ENCODE measurements at regions of chr1 and their contacts with region 1.

Region 1: DNA sequence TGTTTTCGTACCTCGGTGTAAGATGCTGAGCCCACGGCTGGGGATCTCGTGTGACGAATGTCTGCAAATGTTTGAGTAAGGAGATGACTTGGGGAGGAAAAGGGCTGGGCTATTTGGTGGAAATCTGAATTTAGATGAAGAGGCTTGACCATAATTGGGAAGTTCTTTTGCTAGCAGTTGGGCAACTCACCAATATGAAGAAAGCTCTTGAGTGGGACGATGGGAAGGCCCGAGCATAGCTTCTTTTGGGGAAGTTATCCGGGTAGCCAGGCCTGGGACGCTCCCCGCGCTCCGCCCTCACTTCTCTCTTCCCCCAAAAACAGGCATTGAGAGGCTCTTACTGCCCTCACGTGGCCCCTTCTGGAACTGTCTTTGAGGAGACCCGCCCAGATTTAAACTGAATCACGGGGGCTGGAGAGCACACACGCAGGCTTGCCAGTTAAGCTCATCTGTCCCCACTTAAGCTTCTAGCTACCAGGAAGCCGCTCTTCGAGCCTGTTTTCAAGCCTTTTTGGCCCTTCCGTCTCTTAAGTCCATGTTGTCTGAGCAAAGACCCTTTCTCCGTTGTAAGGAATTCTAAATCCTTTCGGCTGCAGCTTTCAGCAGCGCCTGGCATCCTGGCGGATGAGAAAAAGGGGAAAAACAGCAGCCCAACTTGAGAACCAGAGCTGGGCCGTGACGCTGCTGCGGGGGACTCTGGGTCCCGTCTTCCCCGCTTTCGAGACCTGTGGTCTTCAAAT is 93.1 kb downstream of the NID1 start:
- DNase-seq: peak; percentile 88
- ATAC-seq: peak; percentile 97 to 99
- H3K4me3 ChIP-seq: peak overlapping the region; percentile 25; the same call in 2 of the 3 replicates
- H3K27ac ChIP-seq: peak overlapping the region; percentile 69 to 82
- H3K4me1 ChIP-seq: peaks cover 13% of the 10 kb centered on the region
- CTCF ChIP-seq: peak; percentile 91
- EP300 ChIP-seq: no peak
- POLR2A ChIP-seq: no peak
- RAD21 ChIP-seq: peak; percentile 96 to 98

Region 2: GRCh38 chr1:235597867-235598553 is 373.7 kb before region 1 on chr1:
- CTCF ChIA-PET with region 1: interaction called, 10 read pairs
- POLR2A ChIA-PET with region 1: no interaction called
- DNase-seq: peak; percentile 58 to 71
- ATAC-seq: peak; percentile 92 to 93
- H3K4me3 ChIP-seq: no peak overlapping the region
- H3K27ac ChIP-seq: no peak overlapping the region
- H3K4me1 ChIP-seq: no peaks in the 10 kb centered on the region
- CTCF ChIP-seq: peak; percentile 46
- EP300 ChIP-seq: no peak
- POLR2A ChIP-seq: no peak
- RAD21 ChIP-seq: peak; percentile 30 to 42; a peak in 3 of 5 replicates

Region 3: DNA sequence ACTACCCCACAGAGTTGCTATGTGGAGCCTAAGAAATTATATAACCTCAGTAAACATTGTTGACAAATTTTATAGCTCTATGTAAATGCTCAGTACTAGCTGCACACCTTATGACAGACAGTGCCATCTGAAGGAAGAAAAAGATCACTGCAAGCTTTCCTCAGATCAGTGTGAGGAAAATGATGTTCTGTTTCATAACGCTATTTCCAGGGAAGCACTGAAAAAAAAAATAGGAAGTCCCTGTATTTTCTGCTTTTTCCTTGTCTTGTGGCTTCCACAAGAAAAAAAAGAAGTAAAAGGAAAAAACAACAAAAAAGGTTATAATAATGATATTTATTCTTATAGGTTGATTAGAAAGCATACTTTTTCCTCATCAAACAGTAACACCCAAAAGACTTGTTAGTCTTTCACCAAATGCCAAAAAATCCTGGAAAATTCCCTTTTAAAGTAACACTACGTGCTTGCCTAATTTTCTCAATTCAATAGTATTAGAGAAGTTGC is 128.2 kb before region 1 on chr1:
- CTCF ChIA-PET with region 1: interaction called, 27 read pairs
- POLR2A ChIA-PET with region 1: no interaction called
- DNase-seq: peak; percentile 25 to 45
- ATAC-seq: peak; percentile 85 to 94; a peak in 5 of 6 replicates
- H3K4me3 ChIP-seq: no peak overlapping the region
- H3K27ac ChIP-seq: no peak overlapping the region
- H3K4me1 ChIP-seq: peaks cover 7% of the 10 kb centered on the region; the same call in 2 of the 3 replicates
- CTCF ChIP-seq: peak; percentile 60
- EP300 ChIP-seq: no peak
- POLR2A ChIP-seq: no peak
- RAD21 ChIP-seq: peak; percentile 58

Region 4: DNA sequence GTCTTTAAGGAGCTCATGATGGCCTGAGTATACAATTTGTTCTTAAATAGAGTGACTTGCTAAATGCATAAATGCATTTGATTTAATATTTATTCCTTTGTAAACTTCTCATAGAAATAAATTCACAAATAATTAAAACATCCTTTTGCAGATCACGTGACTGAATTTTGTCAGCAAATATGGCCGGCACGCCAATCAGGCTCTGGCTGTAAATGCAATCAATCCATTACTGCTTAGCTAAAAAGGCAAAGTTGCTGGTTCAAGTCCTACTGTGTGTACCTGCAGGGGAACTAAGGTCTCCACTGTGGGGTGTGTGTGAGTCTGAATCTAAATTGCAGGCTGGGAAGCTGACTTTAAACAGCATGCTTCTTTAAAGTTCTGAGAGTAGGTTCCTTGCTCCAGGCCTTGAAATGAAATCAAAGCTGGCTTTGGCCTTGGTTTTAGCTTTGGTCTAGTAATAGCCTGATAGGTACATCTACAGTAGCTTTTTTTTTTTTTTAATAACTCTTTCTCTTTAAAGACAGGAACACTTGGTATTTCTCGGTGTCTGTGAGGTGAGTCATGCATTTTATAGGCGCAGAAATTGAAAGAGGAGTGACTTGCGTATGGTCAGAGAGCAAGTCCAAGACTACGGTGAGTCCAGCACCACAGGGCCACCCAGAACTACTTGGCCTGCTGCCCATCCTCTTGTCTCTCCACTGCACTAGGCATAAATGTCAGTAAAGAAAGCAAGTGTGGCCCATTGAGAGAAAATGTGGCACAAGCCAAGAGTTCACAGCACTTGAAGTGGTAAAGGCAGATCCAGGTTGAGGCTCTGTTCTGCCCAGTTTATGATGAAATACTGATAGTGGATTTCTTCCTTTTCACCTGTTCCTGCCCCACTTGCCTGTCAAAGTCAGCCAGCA is 68.9 kb before region 1 on chr1:
- CTCF ChIA-PET with region 1: interaction called, 33 read pairs
- POLR2A ChIA-PET with region 1: no interaction called
- DNase-seq: peak; percentile 55 to 89
- ATAC-seq: peak; percentile 90 to 93
- H3K4me3 ChIP-seq: no peak overlapping the region
- H3K27ac ChIP-seq: peak overlapping the region; percentile 70 to 84
- H3K4me1 ChIP-seq: peaks cover 34% of the 10 kb centered on the region
- CTCF ChIP-seq: no peak
- EP300 ChIP-seq: peak; percentile 41 to 48; a peak in 2 of 5 replicates
- POLR2A ChIP-seq: no peak
- RAD21 ChIP-seq: no peak; a peak in 1 of 5 replicates

Region 5: DNA sequence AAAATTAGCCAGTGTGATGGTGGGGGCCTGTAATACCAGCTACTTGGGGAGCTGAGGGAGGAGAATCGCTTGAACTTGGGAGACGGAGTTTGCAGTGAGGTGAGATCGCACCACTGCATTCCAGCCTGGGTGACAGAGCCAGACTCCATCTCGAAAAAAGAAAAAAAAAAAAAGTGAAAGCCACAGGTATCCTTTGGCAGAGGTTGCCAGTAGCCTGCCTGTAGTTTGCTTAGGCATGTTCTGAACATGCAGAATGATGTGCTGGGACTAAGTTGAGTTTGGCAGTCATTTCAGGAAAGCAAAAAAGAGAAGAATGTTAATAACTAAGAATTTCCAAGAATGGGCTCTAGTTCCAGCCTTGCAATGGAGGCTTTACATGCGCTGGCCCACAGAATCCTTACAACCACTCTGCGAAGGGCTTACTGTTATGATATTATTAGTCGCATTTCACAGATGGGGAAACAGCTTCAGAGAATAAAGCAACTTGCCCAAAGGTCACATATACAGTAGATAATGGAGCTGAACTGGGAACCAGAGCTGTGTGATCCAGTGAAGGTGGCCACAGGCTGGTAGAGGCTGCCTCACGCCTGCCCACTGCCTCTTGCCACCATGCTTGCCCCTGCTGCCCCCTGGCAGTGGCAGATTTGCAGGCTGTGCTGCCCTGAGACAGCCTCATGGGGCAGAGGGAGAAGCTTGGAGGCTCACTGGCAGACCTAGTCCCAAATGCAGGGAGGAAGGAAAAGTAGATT is 38.5 kb before region 1 on chr1:
- CTCF ChIA-PET with region 1: interaction called, 22 read pairs
- POLR2A ChIA-PET with region 1: no interaction called
- DNase-seq: peak; percentile 27 to 31
- ATAC-seq: peak; percentile 83 to 84; a peak in 5 of 6 replicates
- H3K4me3 ChIP-seq: no peak overlapping the region
- H3K27ac ChIP-seq: peak overlapping the region in 1 of 2 experiments; percentile 56; a peak in 2 of 6 replicates
- H3K4me1 ChIP-seq: no peaks in the 10 kb centered on the region
- CTCF ChIP-seq: no peak
- EP300 ChIP-seq: no peak
- POLR2A ChIP-seq: no peak
- RAD21 ChIP-seq: peak; percentile 22 to 28; a peak in 1 of 5 replicates

Region 6: DNA sequence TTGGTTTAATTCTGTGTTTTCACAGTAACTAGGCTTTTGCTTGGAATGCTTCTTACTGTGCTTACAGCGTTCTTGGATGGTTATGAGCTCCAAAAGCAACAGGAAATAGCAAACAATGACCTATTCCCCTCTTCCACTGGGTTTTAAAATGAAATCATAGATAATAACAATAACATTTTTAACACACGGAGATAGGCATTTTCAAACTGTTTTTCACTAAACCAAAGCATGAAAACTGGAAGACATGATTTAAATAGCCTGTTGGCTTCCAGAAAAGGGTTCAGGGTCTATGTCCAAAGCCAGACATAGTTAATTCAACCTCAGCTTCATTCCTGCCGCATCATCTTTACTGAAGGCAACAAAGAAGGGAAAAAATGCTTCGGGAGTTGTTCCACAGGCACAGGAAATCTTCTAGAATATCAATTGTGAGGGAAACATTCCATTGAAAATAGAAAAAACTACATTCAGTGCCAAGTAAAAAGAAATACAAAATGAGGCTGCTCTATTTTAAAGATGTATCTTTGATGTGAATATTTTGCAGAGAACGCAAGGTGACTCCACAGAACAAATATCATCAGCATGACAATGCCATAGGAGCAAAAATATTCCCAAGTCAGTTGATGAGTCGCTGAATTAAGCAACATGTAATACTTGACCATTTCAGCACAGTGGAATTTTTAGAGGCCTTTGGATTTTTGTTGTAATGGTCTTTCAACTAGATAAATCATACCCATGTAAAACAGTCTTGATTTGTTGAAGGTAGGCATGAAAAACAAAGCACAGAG is 12.5 kb after region 1 on chr1:
- CTCF ChIA-PET with region 1: interaction called, 28 read pairs
- POLR2A ChIA-PET with region 1: no interaction called
- DNase-seq: no peak
- ATAC-seq: no peak; a peak in 2 of 6 replicates
- H3K4me3 ChIP-seq: no peak overlapping the region
- H3K27ac ChIP-seq: peak overlapping the region in 1 of 2 experiments; percentile 9; a peak in 2 of 6 replicates
- H3K4me1 ChIP-seq: peaks cover 7% of the 10 kb centered on the region; the same call in 1 of the 3 replicates
- CTCF ChIP-seq: no peak
- EP300 ChIP-seq: no peak
- POLR2A ChIP-seq: no peak
- RAD21 ChIP-seq: no peak

Region 7: GRCh38 chr1:236016083-236016482 is 44.3 kb after region 1 on chr1:
- CTCF ChIA-PET with region 1: interaction called, 12 read pairs
- POLR2A ChIA-PET with region 1: no interaction called
- DNase-seq: no peak
- ATAC-seq: no peak
- H3K4me3 ChIP-seq: no peak overlapping the region
- H3K27ac ChIP-seq: no peak overlapping the region; a peak in 1 of 6 replicates
- H3K4me1 ChIP-seq: peaks cover 13% of the 10 kb centered on the region; the same call in 2 of the 3 replicates
- CTCF ChIP-seq: no peak
- EP300 ChIP-seq: no peak
- POLR2A ChIP-seq: no peak
- RAD21 ChIP-seq: no peak